ENCODE measurements at regions of chr19 and their contacts with region 1.

Region 1: GRCh38 chr19:13277104-13277809 is 127.0 kb downstream of the IER2 start:
- DNase-seq: peak; percentile 56
- H3K4me3 Mint-ChIP-seq: no peak overlapping the region
- H3K27ac Mint-ChIP-seq: no peak overlapping the region
- H3K4me1 Mint-ChIP-seq: no peaks in the 10 kb centered on the region
- H3K27me3 Mint-ChIP-seq: no peaks in the 10 kb centered on the region
- CTCF ChIP-seq: peak; percentile 21

Region 2: DNA sequence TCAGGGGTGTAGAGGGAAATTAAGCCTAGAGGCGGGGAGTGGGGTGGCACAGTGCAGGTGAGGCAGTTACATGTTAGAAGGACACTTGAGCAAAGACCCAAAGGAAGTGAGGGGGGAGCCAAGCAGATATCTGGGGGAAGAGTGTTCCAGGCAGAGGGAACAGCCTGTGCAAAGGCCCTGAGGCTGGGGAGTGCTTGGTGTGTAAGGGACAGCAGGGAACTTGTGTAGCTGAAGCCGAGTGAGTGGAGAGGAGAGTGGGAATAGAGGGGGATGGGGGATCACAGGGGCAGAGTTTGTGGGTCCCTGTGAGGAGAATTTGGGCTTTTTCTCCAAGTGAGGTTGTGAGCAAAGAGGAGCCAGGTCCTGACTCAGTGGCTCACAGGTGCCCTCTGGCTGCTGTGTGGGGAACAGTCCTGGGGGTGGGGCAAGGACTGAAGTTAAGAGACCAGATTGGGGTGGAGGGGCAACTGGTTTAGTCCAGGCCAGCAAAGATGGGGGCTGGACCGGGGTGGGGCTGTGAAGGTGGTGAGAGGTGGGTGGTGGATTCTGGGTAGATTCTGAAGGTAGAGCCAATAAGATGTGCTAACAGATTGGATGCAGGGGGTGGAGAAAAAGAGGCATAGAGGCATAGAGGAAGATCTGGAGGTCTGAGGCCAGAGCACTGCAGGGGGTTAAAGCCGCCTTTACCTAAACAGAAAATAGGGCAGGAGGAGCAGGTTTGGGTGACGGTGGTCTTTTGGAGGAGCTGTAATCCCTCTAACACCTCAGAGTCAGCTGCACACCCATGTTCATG is 153.7 kb after region 1 on chr19:
- CTCF ChIA-PET with region 1: interaction called, 3 read pairs
- intact Hi-C with region 1: loop called (anchors 2 kb)
- DNase-seq: peak; percentile 56
- H3K4me3 Mint-ChIP-seq: no peak overlapping the region
- H3K27ac Mint-ChIP-seq: no peak overlapping the region
- H3K4me1 Mint-ChIP-seq: no peaks in the 10 kb centered on the region
- H3K27me3 Mint-ChIP-seq: peaks cover 29% of the 10 kb centered on the region
- CTCF ChIP-seq: peak; percentile 60

Region 3: DNA sequence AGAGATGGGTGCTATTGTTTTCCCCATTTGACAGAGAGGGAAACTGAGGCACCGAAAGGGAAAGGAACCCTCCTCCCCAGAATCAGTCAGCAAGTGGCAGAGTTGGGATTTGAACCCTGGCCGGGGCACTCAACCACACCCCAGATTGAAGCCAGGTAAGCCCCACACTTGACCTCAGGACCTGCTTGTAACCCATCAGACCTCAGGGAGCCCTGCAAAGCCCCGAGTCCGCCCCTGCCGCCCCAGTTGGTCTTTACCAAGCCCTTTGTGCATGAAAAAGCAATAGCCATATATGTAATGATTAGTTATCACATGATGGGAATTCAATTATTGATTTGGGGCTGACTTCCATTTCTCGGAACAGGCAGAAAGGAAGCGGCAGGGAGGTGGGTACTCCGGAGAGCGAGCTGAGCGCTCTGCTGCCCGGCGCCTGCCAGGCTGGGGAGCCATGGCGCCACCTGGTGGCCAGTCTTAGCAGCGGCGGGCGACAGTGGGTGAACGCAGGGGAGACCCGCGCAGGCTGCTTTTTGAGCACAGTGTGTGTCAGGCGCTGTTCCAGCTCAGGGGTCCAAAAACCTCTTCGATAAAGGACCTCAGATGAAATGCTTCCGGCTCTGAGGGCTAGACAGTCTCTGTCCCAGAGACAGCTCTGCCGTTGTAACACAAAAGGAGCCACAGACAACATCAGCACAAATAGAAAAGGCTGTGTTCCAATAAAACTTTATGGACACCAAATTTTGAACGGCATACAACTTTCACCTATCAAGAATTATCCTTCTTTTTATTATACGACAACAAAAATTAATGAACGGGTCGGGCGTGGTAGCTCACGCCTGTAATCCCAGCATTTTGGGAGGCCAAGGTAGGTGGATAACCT is 311.9 kb after region 1 on chr19:
- CTCF ChIA-PET with region 1: interaction called, 9 read pairs
- intact Hi-C with region 1: loop called (anchors 1 kb)
- DNase-seq: peak; percentile 85
- H3K4me3 Mint-ChIP-seq: no peak overlapping the region
- H3K27ac Mint-ChIP-seq: no peak overlapping the region
- H3K4me1 Mint-ChIP-seq: no peaks in the 10 kb centered on the region
- H3K27me3 Mint-ChIP-seq: peaks cover 32% of the 10 kb centered on the region
- CTCF ChIP-seq: peak; percentile 88